GM10248 (cell line): ENCODE measurements at regions of chr11 and their contacts with region 1.

Region 1: DNA sequence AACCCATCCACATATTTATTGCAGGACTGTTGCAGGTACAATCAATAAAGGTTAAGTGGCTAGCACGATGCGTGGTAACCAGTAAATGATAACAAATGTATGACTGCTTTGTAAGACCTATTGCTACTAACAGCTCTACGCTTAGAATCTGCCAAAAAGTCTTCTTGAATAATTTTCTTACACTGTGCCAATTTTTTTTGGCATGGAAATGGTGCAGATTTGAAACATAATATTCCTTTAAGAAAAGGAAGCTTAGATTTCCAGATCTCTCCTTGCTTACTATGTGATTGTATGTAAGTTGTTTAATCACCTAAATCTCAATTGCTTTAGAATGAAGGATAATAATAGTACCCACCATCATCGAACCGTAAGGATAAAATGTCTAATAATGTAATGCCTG is 192.0 kb downstream of the LRRC4C start:
- DNase-seq: no peak
- CTCF ChIP-seq: no peak

Region 2: DNA sequence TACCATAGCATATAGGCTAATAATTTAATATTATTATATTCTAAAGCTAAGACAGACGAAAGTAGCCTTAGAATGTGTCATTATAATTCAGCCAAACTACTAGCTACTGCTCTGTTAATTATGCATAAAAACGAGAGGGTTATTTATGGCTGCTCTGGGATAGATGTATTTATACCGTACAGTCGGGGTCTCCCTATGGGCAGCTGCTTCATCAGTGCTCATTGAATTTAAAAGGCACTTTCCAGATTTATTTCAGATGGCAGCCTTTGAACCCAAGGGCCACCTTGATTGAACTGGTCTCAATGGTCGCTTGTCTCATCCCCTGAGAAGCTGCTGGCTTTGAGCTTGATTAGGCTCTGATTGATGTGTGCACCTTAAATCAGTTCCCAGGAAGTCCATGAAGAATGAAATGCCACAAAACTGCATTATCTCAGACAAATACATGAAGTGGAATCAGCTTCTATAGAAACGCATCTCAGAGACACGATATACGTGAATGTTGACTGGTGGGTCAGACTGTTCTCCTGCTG is 185.6 kb before region 1 on chr11:
- CTCF ChIA-PET with region 1: no interaction called
- POLR2A ChIA-PET with region 1: interaction called, 11 read pairs
- DNase-seq: no peak
- CTCF ChIP-seq: no peak

Region 3: GRCh38 chr11:41282395-41282794 is 14.9 kb after region 1 on chr11:
- CTCF ChIA-PET with region 1: no interaction called
- POLR2A ChIA-PET with region 1: no interaction called
- DNase-seq: no peak
- CTCF ChIP-seq: no peak